ENCODE measurements at regions of chr20 and their contacts with region 1.

Region 1: DNA sequence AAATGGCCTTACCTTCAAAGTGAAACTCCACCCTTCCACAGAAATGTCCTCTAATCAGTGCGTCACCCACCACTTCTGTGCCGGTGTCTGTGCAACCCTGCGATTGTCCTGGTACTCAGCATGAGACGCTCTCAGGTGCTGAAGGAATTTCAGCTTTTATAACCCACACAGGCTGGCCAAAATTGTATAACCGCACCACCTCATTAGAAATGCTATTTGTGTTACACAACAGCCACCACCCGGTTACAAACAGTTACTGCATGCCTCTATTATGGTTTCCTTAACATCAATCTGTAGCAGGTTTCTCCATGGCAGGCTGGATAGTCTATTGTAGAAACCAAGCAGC is 51.5 kb downstream of the SLC23A2 start:
- DNase-seq: peak; percentile 52 to 78 (median 78)
- H3K4me3 ChIP-seq: no peak overlapping the region
- H3K27ac ChIP-seq: no peak overlapping the region
- H3K4me1 ChIP-seq: peaks cover 0 to 5% (median 2%) of the 10 kb centered on the region in 4 experiments
- H3K27me3 ChIP-seq: no peaks in the 10 kb centered on the region

Region 2: DNA sequence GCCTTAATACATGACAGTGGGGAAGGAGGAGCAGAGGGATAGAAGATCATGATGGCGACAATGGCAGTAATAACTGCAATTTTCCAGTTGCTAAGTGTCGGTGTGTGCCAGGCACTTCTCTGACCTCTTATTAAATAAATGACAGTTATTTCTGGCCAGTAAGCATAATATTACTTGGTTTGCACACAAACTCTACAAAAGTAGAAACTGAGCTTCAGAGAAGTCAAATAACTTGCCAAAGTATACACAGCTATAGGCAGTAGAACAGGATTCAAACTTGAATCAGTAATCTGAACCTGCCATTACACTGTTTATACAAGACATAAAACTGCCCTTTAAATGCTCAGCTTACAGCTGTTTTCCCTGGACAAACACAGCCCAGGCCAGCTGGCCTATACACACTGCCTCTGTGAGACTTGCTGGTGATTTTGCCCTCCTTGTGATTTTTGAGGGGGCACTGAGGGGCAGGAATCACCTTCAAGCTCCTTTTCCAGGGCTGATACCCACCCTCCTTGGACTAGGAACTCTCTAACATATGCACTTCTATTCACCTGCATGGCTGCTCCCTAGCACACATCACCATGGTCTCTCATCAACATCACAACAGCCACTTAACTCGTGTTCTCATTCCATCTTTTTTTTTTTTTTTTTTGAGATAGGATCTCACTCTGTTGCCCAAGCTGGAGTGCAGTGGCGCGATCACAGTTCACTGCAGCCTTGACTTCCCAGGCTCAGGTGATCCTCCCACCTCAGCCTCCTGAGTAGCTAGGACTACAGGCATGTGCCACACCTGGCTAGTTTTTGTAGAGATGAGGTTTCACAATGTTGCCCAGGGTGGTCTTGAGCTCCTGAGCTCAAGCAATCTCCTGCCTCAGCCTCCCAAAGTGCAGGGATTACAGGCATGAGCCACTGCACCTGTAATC is 12.1 kb before region 1 on chr20:
- CTCF ChIA-PET with region 1: interaction called, 11 read pairs
- POLR2A ChIA-PET with region 1: no interaction called
- DNase-seq: no peak
- H3K4me3 ChIP-seq: no peak overlapping the region
- H3K27ac ChIP-seq: no peak overlapping the region
- H3K4me1 ChIP-seq: no peaks in the 10 kb centered on the region
- H3K27me3 ChIP-seq: no peaks in the 10 kb centered on the region